ENCODE measurements at regions of chr3 and their contacts with region 1.

Region 1: DNA sequence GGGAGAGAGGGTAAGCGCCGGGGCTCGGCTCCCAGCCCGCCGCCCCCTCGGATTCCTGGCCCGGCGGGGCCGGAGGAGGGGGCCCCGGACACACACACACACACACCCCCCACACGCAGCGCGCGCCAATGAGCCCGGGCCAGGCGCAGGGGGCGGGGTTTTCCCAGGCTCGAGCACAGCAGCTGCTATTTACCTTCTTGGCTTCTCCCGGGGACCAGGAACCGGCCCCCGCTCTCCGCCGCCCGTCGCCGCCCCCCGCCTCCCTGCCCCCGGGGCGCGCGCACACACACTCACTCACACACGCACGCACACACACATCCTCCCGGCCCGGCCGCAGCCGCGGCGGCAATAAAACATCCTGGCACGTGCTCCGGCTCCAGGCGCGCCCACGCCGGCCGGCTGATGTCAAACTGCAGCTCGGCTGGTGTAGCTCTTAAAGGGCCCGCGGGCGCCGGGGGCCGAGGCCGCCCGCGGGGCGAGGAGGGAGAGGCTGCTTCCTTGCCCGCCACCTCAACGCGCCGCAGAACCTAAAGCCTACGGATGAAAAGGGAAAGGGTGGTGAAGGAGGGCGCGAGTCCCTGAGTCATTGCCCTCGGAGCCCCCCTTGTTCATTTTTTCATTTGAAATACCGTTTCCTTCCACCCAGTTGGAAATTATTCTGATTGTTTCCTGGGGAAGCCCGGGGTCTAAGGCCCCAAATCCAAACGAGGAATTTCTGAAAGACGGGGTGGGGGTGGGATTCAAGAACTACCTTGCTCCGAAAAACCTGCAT is 1.0 kb upstream of the HES1 start:
- DNase-seq: peak; percentile 89
- H3K4me3 Mint-ChIP-seq: peak overlapping the region; percentile 84
- H3K27ac Mint-ChIP-seq: peak overlapping the region; percentile 90
- H3K4me1 Mint-ChIP-seq: peaks cover 41% of the 10 kb centered on the region
- H3K27me3 Mint-ChIP-seq: peaks cover 54% of the 10 kb centered on the region

Region 2: GRCh38 chr3:193592944-193593667 is 541.8 kb before region 1 on chr3 and contains the start of gene OPA1:
- CTCF ChIA-PET with region 1: no interaction called
- intact Hi-C with region 1: loop called (anchors 2 kb)
- DNase-seq: peak; percentile 96
- H3K4me3 Mint-ChIP-seq: peak within 1 kb of the TSS; percentile 93
- H3K27ac Mint-ChIP-seq: peak within 1 kb of the TSS; percentile 98
- H3K4me1 Mint-ChIP-seq: peaks cover 46% of the 10 kb centered on the region
- H3K27me3 Mint-ChIP-seq: no peaks in the 10 kb centered on the region
- total RNA-seq, gene OPA1: 91.7 to 96.0 TPM

Region 3: DNA sequence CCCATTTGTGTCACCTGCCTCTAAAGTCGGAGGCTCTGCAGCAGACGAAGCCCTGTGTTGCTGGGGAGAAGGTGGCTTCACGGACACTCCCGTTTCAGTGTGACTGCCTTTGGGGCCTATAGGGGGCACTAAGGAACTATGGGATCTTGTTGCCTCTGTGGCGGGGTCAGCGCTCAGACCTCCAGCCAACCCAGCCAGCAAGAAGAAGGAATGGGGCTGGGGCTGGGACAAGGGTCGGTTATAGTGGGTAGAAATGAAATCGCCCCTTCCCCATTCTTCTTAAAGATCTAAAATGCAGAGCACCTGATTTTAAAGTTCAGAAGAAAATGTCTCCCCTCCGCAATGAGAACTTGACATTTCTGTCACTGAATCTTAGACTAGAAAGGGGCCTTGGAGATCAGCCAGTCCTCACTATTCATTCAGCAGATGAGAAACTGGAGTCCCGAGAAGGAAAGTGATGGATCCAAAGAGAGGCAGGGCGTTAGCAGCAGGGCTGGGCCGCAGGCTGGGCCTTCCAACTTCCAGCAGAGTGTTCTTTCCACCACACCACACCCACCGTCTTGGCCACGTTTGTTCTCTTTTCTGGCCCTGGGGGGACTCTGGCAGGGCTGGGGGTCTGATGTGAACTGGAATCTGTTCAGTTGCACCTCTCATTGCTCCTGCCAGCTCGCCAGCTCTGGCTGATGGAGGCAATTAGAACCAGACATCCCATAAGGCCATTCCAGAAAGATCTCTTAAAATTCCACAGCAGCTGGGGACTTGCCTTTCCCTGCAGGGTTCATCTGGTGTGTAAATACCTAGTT is 346.6 kb before region 1 on chr3:
- CTCF ChIA-PET with region 1: no interaction called
- intact Hi-C with region 1: loop called (anchors 1 kb)
- DNase-seq: peak; percentile 49
- H3K4me3 Mint-ChIP-seq: no peak overlapping the region
- H3K27ac Mint-ChIP-seq: no peak overlapping the region
- H3K4me1 Mint-ChIP-seq: no peaks in the 10 kb centered on the region
- H3K27me3 Mint-ChIP-seq: peaks cover 7% of the 10 kb centered on the region

Region 4: DNA sequence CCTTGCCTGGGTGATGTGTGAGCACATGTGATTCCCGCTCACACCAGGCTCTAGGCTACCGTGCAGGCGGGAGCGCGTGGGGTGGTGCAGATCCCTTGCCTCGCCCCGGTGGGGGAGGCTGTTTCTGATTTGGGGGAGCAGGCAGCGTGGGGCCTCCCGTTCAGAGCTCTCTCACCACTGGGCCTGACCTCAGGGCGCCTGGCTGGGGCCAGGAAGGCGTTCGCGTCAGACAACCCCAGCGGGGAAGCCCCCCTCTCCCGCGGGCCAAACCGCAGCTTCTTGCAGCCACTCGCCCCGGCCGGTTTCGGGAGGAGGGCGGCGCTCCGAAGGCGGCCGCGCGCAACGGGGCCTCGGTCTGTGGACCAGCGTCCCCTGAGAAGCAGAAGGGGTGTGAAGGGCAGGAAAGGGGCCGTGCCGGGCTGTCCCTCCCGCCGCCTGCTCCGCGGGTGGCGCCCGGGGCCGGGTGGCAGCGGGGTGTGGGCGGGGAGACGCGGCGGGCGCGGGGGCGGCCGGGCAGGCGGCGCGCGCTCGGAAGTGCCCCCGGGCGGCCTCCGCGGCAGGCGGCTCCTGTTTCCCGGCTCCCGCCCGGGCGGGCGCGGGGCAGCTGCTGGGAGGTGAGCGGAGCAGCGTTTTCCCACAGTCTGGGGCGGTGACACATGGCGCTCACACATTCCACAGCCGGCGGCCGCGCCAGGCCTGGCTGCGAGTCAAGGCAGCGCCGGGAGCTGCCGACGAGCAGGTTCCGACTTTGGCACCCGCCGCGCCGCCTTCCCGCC is 64.1 kb before region 1 on chr3:
- CTCF ChIA-PET with region 1: no interaction called
- intact Hi-C with region 1: loop called (anchors 1 kb)
- DNase-seq: peak; percentile 88
- H3K4me3 Mint-ChIP-seq: peak overlapping the region; percentile 57
- H3K27ac Mint-ChIP-seq: no peak overlapping the region
- H3K4me1 Mint-ChIP-seq: peaks cover 22% of the 10 kb centered on the region
- H3K27me3 Mint-ChIP-seq: peaks cover 19% of the 10 kb centered on the region

Region 5: GRCh38 chr3:194306109-194306686 is 171.3 kb after region 1 on chr3:
- CTCF ChIA-PET with region 1: interaction called, 3 read pairs
- intact Hi-C with region 1: loop called (anchors 1 kb)
- DNase-seq: peak; percentile 83
- H3K4me3 Mint-ChIP-seq: no peak overlapping the region
- H3K27ac Mint-ChIP-seq: peak overlapping the region; percentile 94
- H3K4me1 Mint-ChIP-seq: peaks cover 37% of the 10 kb centered on the region
- H3K27me3 Mint-ChIP-seq: no peaks in the 10 kb centered on the region

Region 6: GRCh38 chr3:194583604-194584318 is 448.8 kb after region 1 on chr3:
- CTCF ChIA-PET with region 1: no interaction called
- intact Hi-C with region 1: loop called (anchors 10 kb)
- DNase-seq: peak; percentile 94
- H3K4me3 Mint-ChIP-seq: peak overlapping the region; percentile 94
- H3K27ac Mint-ChIP-seq: peak overlapping the region; percentile 94
- H3K4me1 Mint-ChIP-seq: peaks cover 19% of the 10 kb centered on the region
- H3K27me3 Mint-ChIP-seq: no peaks in the 10 kb centered on the region

Region 7: GRCh38 chr3:195542698-195543499 is 1408.0 kb after region 1 on chr3 and contains the start of gene PPP1R2:
- CTCF ChIA-PET with region 1: no interaction called
- intact Hi-C with region 1: no loop called
- DNase-seq: peak; percentile 93
- H3K4me3 Mint-ChIP-seq: peak within 1 kb of the TSS; percentile 88
- H3K27ac Mint-ChIP-seq: peak within 1 kb of the TSS; percentile 94
- H3K4me1 Mint-ChIP-seq: peaks cover 53% of the 10 kb centered on the region
- H3K27me3 Mint-ChIP-seq: no peaks in the 10 kb centered on the region
- total RNA-seq, gene PPP1R2: 99.7 to 105 TPM

Measured in activated naive CD4-positive, alpha-beta T cell treated with anti-CD3 and anti-CD28 coated beads for 36 hours (primary cell).